ENCODE measurements at regions of chr12 and their contacts with region 1.

Region 1: GRCh38 chr12:120580787-120581723 is at the start of gene POP5:
- DNase-seq: peak; percentile 98
- H3K4me3 ChIP-seq: peak within 1 kb of the TSS; percentile 75 to 78
- H3K27ac ChIP-seq: peak within 1 kb of the TSS; percentile 69
- H3K4me1 ChIP-seq: peaks cover 0 to 35% (median 22%) of the 10 kb centered on the region in 4 donors
- H3K27me3 ChIP-seq: no peaks in the 10 kb centered on the region
- CTCF ChIP-seq: no peak

Region 2: GRCh38 chr12:120534203-120534702 is 46.8 kb before region 1 on chr12 and contains the start of gene RNF10:
- intact Hi-C with region 1: no loop called
- DNase-seq: peak; percentile 66 to 88
- H3K4me3 ChIP-seq: peak within 1 kb of the TSS; percentile 86 to 98
- H3K27ac ChIP-seq: peak within 1 kb of the TSS; percentile 90 to 96
- H3K4me1 ChIP-seq: peaks cover 9 to 52% (median 42%) of the 10 kb centered on the region in 4 donors
- H3K27me3 ChIP-seq: no peaks in the 10 kb centered on the region
- CTCF ChIP-seq: no peak

Region 3: GRCh38 chr12:120649442-120650232 is 68.6 kb after region 1 on chr12:
- intact Hi-C with region 1: loop called (anchors 5 kb)
- DNase-seq: peak in 1 of 2 donors; percentile 78
- H3K4me3 ChIP-seq: peak overlapping the region; percentile 42 to 57
- H3K27ac ChIP-seq: peak overlapping the region; percentile 88 to 92
- H3K4me1 ChIP-seq: peaks cover 0 to 58% (median 42%) of the 10 kb centered on the region in 4 donors
- H3K27me3 ChIP-seq: peaks cover 0 to 17% of the 10 kb centered on the region in 2 donors
- CTCF ChIP-seq: no peak

Region 4: DNA sequence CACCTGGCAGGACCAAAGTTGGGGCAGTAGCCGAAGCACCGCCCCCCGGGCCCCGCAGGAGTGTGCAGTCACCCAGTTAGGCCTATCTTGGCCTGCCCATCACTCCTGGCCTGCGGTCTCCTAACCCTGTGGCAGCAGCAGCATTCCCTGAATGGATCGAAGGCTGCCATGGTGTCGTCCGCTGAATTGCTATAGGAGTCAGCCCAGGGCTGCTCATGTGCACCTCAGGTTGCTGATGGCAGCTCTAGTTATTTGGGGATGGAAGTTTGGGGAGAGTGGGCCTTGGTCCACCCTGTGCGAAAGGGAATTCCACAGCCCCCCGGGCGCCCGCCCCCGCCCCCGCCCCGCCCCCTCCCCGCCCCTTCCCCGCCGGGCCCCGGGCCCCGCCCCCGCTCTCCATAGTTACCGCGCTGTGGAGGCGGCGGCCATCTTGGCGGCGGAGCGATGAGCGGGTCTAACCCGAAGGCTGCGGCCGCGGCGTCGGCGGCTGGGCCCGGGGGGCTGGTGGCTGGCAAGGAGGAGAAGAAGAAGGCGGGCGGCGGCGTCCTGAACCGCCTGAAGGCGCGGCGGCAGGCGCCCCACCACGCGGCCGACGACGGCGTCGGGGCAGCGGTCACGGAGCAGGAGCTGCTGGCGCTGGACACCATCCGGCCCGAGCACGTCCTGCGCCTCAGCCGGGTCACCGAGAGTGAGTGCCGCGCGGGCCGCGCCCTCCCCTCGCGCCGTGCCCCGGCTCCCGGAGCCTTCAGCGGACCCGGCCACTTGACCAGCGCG is 129.2 kb after region 1 on chr12 and contains the start of gene UNC119B:
- intact Hi-C with region 1: loop called (anchors 5 kb)
- DNase-seq: peak; percentile 59 to 83
- H3K4me3 ChIP-seq: peak within 1 kb of the TSS; percentile 65 to 91
- H3K27ac ChIP-seq: peak within 1 kb of the TSS; percentile 89 to 90
- H3K4me1 ChIP-seq: peaks cover 0 to 23% (median 16%) of the 10 kb centered on the region in 4 donors
- H3K27me3 ChIP-seq: no peaks in the 10 kb centered on the region
- CTCF ChIP-seq: peak in 1 of 2 experiments; percentile 10

Region 5: GRCh38 chr12:120909633-120910298 is 328.7 kb after region 1 on chr12:
- intact Hi-C with region 1: loop called (anchors 5 kb)
- DNase-seq: no peak
- H3K4me3 ChIP-seq: no peak overlapping the region
- H3K27ac ChIP-seq: no peak overlapping the region
- H3K4me1 ChIP-seq: peaks cover 0 to 26% (median 16%) of the 10 kb centered on the region in 4 donors
- H3K27me3 ChIP-seq: no peaks in the 10 kb centered on the region
- CTCF ChIP-seq: no peak

Region 6: GRCh38 chr12:120971299-120972179 is 390.5 kb after region 1 on chr12:
- intact Hi-C with region 1: loop called (anchors 5 kb)
- DNase-seq: no peak
- H3K4me3 ChIP-seq: no peak overlapping the region
- H3K27ac ChIP-seq: no peak overlapping the region
- H3K4me1 ChIP-seq: no peaks in the 10 kb centered on the region
- H3K27me3 ChIP-seq: peaks cover 0 to 3% of the 10 kb centered on the region in 2 donors
- CTCF ChIP-seq: peak; percentile 70 to 78

Region 7: GRCh38 chr12:121107691-121108090 is 526.6 kb after region 1 on chr12:
- intact Hi-C with region 1: loop called (anchors 10 kb)
- DNase-seq: no peak
- H3K4me3 ChIP-seq: no peak overlapping the region
- H3K27ac ChIP-seq: no peak overlapping the region
- H3K4me1 ChIP-seq: no peaks in the 10 kb centered on the region
- H3K27me3 ChIP-seq: no peaks in the 10 kb centered on the region
- CTCF ChIP-seq: no peak

Region 8: DNA sequence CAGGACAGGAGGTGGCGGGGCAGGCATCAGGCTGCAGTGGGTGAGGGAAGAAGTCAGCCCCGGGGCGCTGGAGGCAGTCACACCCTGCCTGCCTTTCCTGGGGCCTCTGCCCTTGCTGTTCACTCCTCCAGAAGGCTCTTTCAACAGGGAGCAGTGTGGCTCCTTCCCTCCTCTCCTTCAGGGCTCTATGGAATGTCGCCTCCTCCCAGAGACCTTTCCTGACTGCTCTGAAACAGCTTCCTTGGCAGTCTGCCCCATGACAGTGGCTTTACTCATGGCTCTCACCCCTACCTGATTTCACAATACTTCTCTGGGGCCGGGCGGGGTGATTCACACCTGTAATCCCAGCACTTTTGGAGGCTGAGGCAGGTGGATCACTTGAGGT is 1205.4 kb after region 1 on chr12:
- intact Hi-C with region 1: no loop called
- DNase-seq: no peak
- H3K4me3 ChIP-seq: no peak overlapping the region
- H3K27ac ChIP-seq: no peak overlapping the region
- H3K4me1 ChIP-seq: peaks cover 0 to 11% (median 8%) of the 10 kb centered on the region in 4 donors
- H3K27me3 ChIP-seq: no peaks in the 10 kb centered on the region
- CTCF ChIP-seq: no peak

Measured in tibial artery (tissue), 4 donors.